Thyroid gland (tissue), 4 donors: ENCODE measurements at regions of chr10 and their contacts with region 1.

Region 1: DNA sequence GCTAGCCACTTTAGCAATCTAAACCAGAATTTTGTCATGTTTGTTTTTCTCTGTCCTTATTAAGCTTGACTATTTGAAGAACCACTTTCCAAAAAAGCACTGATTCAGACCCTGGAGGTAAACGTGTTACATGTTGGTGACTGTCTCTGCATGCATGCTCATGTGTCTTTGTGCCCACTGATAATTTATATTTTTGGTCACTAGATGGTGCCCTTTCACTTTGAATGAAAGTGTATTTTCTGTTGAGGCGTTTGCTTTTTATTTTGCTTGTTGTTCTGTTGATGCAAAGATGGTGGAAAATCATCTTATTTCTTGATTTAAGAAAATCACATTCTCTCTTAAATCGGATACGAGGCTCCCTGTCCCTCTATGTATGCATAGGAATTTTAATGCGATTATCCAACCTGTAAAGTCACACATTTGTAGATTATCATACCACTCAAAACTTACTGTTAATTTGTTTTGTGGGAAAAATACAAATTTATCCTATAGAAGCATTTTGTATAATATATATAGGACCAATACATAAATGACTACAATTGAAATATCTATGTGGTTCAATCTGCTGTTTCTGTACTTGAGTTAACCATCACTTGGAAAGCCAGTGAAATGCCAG is 269.3 kb downstream of the BICC1 start:
- DNase-seq: no peak
- H3K4me3 ChIP-seq: no peak overlapping the region
- H3K27ac ChIP-seq: no peak overlapping the region
- H3K4me1 ChIP-seq: no peaks in the 10 kb centered on the region
- H3K27me3 ChIP-seq: no peaks in the 10 kb centered on the region
- CTCF ChIP-seq: peak in 5 of 6 experiments; percentile 33 to 80 (median 57)
- POLR2A ChIP-seq: no peak

Region 2: GRCh38 chr10:58952747-58953466 is 170.9 kb after region 1 on chr10:
- intact Hi-C with region 1: loop called (anchors 10 kb)
- DNase-seq: peak; percentile 43 to 44
- H3K4me3 ChIP-seq: no peak overlapping the region
- H3K27ac ChIP-seq: peak overlapping the region in 1 of 3 donors; percentile 65
- H3K4me1 ChIP-seq: no peaks in the 10 kb centered on the region
- H3K27me3 ChIP-seq: no peaks in the 10 kb centered on the region
- CTCF ChIP-seq: peak; percentile 46 to 81 (median 68)
- POLR2A ChIP-seq: no peak

Region 3: DNA sequence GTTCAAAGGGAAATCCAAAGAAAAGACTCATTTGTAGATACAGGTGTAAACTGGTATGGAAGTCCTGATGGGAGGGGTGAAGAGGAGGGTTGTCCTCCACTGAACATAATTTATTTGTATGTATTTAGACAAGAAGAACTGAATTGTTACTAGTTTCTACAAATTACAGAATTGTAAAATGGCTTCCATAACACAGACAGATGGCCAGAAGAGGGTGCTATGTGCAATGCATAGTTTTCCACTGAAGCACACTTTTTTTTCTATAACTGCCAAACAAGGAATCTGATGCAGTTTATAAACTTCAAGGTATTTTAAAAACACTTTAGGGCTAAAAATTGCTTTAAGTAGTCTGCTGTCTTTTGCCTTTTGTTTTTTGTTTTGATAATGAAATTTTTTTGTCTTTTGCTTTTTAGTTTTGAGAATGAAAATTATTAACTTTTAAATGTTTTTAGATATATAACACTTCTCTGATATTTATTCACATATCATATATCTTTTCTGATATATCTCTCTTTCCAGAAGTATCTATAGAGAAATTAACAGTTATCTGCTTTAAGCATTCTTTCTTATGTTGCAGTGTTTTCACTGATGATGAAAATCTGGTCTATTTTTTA is 452.9 kb after region 1 on chr10:
- intact Hi-C with region 1: loop called (anchors 10 kb)
- DNase-seq: peak; percentile 12 to 16
- H3K4me3 ChIP-seq: no peak overlapping the region
- H3K27ac ChIP-seq: no peak overlapping the region
- H3K4me1 ChIP-seq: no peaks in the 10 kb centered on the region
- H3K27me3 ChIP-seq: no peaks in the 10 kb centered on the region
- CTCF ChIP-seq: peak in 5 of 6 experiments; percentile 18 to 57 (median 55)
- POLR2A ChIP-seq: no peak